Activated CD8-positive, alpha-beta T cell treated with anti-CD3 and anti-CD28 coated beads, Interleukin-2, amount 10 ng/mL, durations not matched to agents 7 days and 5 days (primary cell): ENCODE measurements at regions of chr15 and their contacts with region 1.

Region 1: DNA sequence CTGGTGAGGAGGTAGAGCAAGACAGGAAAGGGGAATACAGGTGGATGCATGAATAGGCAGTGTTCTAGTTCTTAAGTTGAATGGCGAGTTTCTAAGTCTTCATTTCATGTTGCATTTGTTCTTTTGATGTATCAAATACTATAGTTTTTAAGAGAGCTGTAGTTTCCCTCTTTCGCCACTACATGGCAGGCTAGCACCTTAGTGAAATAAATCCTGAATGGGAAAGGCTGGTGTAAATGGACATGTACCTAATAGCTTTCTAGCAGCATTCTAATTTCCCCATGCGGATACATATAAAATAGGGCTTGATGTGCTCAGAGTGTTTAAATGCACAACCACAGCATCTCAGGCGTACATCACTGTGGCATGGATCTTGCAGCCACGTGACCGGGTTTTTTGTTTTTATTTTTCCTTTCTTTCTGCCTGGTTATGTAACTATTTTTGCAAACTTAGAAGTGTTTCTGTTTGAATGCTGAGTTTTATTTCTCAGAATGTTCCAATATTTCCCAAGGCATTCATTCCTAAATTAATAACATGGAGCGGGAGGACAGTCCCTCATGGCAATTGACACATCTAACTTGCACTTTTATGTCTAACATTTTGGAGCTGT is 23.5 kb upstream of the CLN6 start:
- DNase-seq: peak; percentile 63
- ATAC-seq: peak; percentile 63
- H3K4me3 Mint-ChIP-seq: no peak overlapping the region
- H3K27ac Mint-ChIP-seq: no peak overlapping the region
- H3K4me1 Mint-ChIP-seq: peaks cover 7% of the 10 kb centered on the region
- H3K27me3 Mint-ChIP-seq: peaks cover 27% of the 10 kb centered on the region

Region 2: DNA sequence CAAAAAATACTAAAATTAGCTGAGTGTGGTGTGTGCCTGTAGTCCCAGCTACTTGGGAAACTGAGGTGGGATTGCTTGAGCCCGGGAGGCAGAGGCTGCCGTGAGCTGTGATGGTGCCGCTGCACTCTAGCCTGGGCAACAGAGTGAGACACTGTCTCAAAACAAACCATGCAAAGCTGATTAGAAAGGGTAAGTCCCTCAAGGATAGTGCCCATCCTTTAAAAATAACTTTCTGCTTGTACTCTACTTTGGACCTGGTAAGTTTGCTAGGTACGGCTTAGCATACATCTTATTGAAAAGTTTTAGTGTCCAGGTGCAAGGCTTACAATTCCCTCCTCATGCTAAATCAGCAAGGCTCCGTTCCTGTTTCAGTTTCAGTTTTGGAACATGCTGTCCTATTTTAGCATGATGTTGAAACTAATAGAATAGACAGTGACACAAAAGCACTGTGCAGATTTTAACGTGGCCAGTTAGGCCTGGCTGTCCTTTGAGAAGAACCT is 45.9 kb after region 1 on chr15:
- CTCF ChIA-PET with region 1: interaction called, 152 read pairs
- POLR2A ChIA-PET with region 1: interaction called, 3 read pairs
- DNase-seq: peak; percentile 58
- ATAC-seq: peak; percentile 93
- H3K4me3 Mint-ChIP-seq: peak overlapping the region; percentile 69
- H3K27ac Mint-ChIP-seq: peak overlapping the region; percentile 88
- H3K4me1 Mint-ChIP-seq: peaks cover 27% of the 10 kb centered on the region
- H3K27me3 Mint-ChIP-seq: no peaks in the 10 kb centered on the region

Region 3: GRCh38 chr15:68383161-68384074 is 130.4 kb after region 1 on chr15:
- CTCF ChIA-PET with region 1: interaction called, 10 read pairs
- POLR2A ChIA-PET with region 1: no interaction called
- DNase-seq: peak; percentile 70
- ATAC-seq: peak; percentile 57
- H3K4me3 Mint-ChIP-seq: no peak overlapping the region
- H3K27ac Mint-ChIP-seq: no peak overlapping the region
- H3K4me1 Mint-ChIP-seq: peaks cover 25% of the 10 kb centered on the region
- H3K27me3 Mint-ChIP-seq: no peaks in the 10 kb centered on the region